ENCODE measurements at regions of chr15 and their contacts with region 1.

Region 1: GRCh38 chr15:89430530-89431341 is 65.6 kb downstream of the RHCG start:
- DNase-seq: peak; percentile 96

Region 2: GRCh38 chr15:89416141-89416853 is 14.4 kb before region 1 on chr15:
- CTCF ChIA-PET with region 1: interaction called, 58 read pairs
- POLR2A ChIA-PET with region 1: interaction called, 6 read pairs
- DNase-seq: peak; percentile 95

Region 3: GRCh38 chr15:89442671-89443307 is 12.1 kb after region 1 on chr15:
- CTCF ChIA-PET with region 1: interaction called, 31 read pairs
- POLR2A ChIA-PET with region 1: no interaction called
- DNase-seq: peak; percentile 86

Measured in HEK293T (cell line).